Sciatic nerve (tissue), 2 donors: ENCODE measurements at regions of chr11 and their contacts with region 1.

Region 1: DNA sequence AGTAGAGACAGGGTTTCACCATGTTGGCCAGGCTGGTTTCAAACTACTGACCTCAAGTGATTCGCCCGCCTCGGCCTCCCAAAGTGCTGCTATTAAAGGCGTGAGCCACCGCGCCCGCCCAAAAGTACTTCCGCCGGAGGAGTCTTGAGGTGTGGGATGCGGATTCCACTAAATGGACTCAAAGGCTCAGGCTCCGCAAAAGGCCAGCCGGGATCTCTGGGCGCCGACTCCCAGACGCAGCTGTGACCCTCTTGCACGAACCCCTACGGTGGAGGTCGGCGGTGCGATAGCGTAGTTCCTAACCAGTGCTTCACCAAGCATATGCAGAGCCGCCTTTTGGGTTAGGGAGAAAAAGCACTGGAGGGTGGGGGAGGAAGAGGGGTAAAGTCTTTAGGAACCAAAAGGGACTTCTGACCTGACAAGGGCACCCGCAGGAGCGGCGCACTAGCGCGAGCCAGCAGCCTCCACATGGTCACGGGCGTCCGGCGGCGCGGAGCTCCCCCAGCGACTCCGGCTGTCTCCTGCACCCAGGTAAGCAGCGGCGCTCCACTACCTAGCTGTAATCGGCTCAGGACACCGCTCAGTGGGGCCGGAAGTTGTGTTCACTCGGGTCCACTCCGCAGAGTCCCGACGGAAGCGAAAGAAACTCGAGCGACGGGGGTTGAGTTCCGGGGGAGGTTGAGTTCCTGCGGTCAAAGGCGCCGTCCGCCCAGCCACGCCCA is at the start of gene MRPL16:
- DNase-seq: peak; percentile 90
- ATAC-seq: peak; percentile 98
- total RNA-seq, gene MRPL16: 25.1 TPM

Region 2: DNA sequence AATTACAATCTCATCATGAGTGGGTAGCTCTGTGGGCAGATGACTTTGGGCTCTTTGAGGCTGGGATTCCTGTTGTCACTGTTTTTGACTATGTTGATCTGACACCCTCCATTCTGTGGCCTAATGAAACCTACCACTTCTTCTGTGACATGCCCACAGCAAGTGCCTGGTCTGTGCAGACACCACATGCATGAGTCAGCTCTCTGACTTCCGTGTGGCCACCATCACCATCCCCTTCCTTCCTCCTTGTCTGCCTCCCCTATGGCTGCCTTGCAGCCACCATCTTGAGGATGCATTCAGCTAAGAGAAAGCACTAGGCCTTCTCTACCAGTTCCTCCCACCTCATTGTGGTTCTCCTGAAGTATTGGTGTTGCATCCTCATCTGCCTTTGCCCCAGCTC is 81.4 kb before region 1 on chr11:
- intact Hi-C with region 1: no loop called
- DNase-seq: no peak
- ATAC-seq: no peak

Region 3: DNA sequence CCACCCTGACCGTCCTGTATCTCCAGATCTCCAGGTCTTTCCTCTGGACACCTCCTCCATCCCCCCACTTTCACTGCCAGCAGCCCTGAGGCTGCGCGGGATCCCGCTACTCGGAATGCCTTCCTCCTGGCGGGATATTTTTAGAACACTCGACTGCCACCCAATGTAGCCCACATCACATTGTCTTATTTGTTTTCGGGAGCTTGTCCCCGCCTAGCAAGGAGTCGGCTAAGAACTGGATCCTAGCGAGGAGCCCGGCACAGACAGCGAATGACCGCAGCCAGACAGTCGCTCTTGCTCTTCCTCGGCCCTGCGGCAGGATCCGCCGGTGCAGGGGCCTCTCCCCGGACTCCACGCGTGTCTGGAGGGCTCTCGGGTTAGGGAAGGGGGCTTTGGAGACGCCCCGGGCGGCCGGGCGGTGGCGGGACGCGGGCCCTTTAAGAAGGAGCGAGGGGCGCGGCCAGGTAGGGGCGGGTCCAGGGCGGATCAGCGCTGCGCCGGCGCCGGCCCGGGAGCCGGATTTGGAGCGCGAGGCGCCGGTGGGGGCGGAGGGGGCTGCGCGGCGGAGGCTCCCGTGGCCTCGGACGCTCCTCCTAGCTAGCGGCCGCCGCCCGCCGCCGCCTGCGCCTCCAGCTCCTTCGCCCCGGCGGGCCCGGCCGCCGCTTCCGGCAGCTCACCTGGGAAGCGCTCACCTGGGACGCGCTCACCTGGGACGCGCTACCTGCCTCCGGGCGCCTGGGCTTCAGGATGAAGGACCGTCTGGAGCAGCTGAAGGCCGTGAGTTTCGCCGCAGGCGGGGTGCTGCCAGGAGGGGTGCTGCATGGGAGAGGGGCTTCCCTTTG is 55.3 kb before region 1 on chr11 and contains the start of gene STX3:
- intact Hi-C with region 1: loop called (anchors 5 kb)
- DNase-seq: peak; percentile 68
- ATAC-seq: peak; percentile 54
- total RNA-seq, gene STX3: 19.3 TPM